Left cardiac atrium (tissue), 4 donors: ENCODE measurements at regions of chr2 and their contacts with region 1.

Region 1: DNA sequence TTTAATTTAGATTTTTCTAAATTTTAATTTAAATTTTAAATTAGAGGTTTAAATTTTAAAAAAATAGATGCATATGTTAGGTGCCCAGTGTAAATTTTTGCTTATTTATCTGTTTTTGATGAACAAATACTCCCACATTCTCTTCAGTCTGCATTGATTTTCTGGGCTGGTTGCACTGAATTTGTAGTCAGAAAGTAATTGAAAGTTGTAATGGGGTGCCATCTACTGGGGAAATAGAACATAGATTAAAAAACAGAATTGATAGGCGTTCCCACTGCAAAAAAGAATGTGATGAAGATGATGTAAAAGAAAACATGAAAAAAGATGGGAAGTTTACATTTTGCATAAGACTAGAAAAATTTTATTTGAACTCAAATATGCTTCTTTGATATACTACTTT is 51.7 kb upstream of the CCDC85A start:
- DNase-seq: no peak
- ATAC-seq: peak in 1 of 2 donors; percentile 32

Region 2: DNA sequence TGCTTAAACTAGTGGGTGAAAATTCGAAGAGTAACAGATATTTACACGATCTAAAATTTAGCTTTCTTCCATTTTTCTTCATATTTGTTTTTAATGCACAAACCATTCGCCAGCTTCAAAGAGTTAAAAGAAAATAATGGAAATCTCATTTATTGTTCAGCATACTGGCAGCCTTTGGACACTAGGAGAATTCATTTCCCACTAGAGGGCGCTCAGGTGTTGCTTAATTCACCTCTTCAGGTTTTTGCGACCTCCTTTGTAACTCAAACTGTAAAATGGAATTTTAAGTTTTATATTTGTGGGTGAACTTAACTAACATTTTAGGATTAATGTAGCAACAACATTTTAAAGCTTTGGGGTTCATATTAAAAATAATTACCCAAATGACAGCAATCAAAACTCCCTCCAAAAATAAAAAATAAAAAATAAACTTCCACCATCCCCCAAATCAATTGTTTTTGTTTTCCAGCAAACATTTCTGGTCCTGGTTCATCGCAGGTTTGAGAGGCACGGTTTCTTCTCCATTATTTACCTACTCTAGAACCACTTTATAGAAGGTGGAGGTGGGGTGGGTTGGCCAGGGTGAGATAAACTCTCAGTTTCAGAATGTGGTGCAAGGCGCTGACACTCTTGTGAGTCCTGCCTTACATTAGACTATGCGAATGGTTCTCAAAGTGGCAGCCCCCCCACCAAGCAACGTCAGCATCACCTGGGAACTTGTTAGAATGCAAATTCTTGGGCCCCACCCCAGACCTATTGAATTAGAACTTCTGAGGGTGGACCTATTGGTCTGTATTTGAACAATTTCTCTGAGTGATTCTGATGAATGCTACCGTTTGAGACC is 413.8 kb before region 1 on chr2:
- intact Hi-C with region 1: loop called (anchors 2 to 5 kb)
- DNase-seq: peak; percentile 45
- ATAC-seq: peak in 1 of 2 donors; percentile 48

Region 3: GRCh38 chr2:55916473-55917049 is 215.6 kb before region 1 on chr2:
- intact Hi-C with region 1: no loop called
- DNase-seq: no peak
- ATAC-seq: peak in 1 of 2 donors; percentile 13

Region 4: GRCh38 chr2:56230171-56230570 is 98.0 kb after region 1 on chr2:
- intact Hi-C with region 1: no loop called
- DNase-seq: no peak
- ATAC-seq: no peak

Region 5: DNA sequence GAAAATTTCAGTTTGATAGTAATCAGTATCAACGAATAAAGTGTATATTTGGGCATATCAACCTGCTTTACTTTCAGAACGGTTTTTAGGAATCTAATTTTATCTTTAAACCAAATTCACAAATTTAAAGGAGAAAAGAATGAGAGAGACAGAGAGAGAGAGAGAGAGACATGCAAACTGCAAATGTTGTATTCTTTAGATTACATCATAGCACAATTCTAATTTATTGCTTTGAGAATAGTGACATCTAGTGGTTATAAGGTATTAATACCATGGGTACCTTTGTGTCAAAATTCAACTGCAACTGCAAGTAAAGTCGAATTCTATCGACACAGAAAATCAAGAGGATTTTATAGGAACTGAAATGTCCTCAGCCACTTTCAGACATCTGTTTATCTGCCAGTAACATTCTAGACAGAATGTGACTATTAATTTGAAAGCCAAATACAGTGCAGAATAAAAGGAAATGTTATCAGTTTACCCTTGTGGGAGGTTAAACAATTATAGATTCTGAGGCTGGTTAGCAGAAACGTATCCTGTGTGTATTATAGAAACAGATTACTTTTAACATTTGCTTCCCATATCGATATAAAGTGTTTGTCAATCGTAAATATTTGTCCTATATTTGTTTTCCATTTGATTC is 1384.7 kb after region 1 on chr2:
- intact Hi-C with region 1: loop called in 1 of 2 experiments (anchors 5 kb)
- DNase-seq: no peak
- ATAC-seq: peak in 1 of 2 donors; percentile 47